ENCODE measurements at regions of chr7 and their contacts with region 1.

Region 1: GRCh38 chr7:37510043-37510634 is 61.5 kb upstream of the ELMO1 start:
- DNase-seq: peak; percentile 49
- H3K4me3 Mint-ChIP-seq: no peak overlapping the region
- H3K27ac Mint-ChIP-seq: no peak overlapping the region
- H3K4me1 Mint-ChIP-seq: no peaks in the 10 kb centered on the region
- H3K27me3 Mint-ChIP-seq: peaks cover 7% of the 10 kb centered on the region

Region 2: GRCh38 chr7:36986429-36987362 is 523.4 kb before region 1 on chr7:
- CTCF ChIA-PET with region 1: no interaction called
- intact Hi-C with region 1: loop called (anchors 2 kb)
- DNase-seq: peak; percentile 80
- H3K4me3 Mint-ChIP-seq: no peak overlapping the region
- H3K27ac Mint-ChIP-seq: no peak overlapping the region
- H3K4me1 Mint-ChIP-seq: peaks cover 27% of the 10 kb centered on the region
- H3K27me3 Mint-ChIP-seq: no peaks in the 10 kb centered on the region

Region 3: DNA sequence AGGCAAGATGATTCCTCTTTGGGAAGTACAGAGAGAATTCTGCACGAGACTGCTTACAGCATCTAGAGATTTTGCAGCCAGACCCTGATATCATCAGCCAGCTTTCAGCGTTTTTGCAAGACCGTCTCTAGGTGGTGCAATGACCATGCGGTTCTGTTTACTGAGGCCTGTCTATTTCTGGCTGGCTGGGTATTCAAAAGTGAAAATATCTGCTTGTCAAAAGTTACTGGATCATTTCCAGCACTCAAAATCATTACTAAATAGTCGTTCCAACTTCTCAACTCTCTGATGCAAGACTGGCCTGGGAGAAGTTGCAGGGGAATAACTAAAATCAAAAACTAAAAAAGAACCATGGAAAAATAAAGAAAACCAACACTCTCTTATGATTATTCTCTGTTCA is 301.6 kb before region 1 on chr7:
- CTCF ChIA-PET with region 1: interaction called, 4 read pairs
- intact Hi-C with region 1: loop called (anchors 5 kb)
- DNase-seq: peak; percentile 52
- H3K4me3 Mint-ChIP-seq: no peak overlapping the region
- H3K27ac Mint-ChIP-seq: peak overlapping the region; percentile 56
- H3K4me1 Mint-ChIP-seq: peaks cover 23% of the 10 kb centered on the region
- H3K27me3 Mint-ChIP-seq: no peaks in the 10 kb centered on the region

Region 4: DNA sequence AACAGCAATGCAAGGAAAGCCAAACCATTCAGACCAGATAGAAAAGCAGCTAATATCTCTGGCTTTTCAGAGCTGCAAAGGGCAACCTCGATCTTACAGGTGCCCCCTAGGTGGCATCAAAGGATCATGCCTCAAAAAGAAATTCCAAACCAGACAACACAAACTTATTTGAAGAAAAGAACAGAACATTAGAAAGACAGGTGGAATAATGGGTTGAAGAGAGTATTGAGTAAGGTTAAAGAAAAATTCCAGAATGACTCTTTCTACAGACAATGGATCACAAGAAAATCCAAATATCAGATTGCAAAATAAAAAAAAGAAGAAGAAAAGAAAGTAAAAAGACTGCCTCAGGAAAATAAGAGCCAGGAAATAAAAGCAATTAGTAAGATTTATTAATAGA is 275.2 kb before region 1 on chr7:
- CTCF ChIA-PET with region 1: interaction called, 19 read pairs
- intact Hi-C with region 1: no loop called
- DNase-seq: no peak
- H3K4me3 Mint-ChIP-seq: no peak overlapping the region
- H3K27ac Mint-ChIP-seq: no peak overlapping the region
- H3K4me1 Mint-ChIP-seq: peaks cover 16% of the 10 kb centered on the region
- H3K27me3 Mint-ChIP-seq: no peaks in the 10 kb centered on the region

Region 5: DNA sequence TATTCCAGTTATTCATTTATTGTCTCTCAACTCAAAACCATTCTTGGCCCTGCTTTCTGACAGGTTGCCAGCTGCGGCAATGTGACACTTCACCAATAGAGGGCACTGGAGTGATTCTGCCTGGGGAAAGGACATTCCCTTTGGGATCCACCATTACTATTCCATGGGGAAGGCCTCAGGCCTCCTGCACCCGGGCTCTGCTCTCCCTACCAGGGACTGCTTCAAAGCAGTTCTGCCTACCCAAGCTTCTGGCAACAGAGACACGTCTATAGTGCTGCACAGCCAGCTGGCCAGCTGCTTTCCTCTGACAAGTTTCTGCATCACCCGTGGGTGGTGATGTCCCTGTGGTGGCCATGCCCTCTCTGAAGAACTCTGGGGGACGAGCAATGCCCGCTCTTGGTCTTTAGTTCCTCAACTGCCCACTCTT is 225.3 kb before region 1 on chr7:
- CTCF ChIA-PET with region 1: interaction called, 6 read pairs
- intact Hi-C with region 1: loop called (anchors 1 kb)
- DNase-seq: peak; percentile 53
- H3K4me3 Mint-ChIP-seq: no peak overlapping the region
- H3K27ac Mint-ChIP-seq: no peak overlapping the region
- H3K4me1 Mint-ChIP-seq: peaks cover 72% of the 10 kb centered on the region
- H3K27me3 Mint-ChIP-seq: no peaks in the 10 kb centered on the region

Region 6: DNA sequence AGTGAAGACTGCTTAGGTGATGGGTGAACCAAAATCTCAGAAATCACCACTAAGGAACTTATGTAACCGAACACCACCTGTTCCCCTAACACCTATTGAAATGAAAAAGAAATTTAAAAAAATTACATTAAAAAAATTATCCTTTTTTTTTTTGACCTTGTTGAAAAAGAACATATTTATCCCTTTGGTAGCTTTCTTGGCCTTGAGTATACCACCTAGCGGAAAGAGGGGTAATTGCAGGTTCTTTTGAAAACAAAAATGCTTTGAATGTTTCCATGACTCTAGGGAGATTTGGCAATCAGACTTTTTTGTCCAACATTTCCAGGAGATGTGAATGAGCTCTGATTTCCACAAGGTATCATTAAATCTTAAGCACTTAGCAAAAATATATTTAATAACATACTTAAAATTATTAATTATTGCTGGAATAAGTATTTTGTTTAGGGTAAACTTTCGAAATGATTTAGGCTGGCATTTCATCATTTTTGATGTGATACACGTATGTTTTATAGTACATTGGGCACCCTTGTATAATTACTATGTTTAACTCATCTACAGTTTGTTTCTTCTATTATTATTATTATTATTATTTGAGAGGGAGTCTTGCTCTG is 14.5 kb before region 1 on chr7:
- CTCF ChIA-PET with region 1: interaction called, 48 read pairs
- intact Hi-C with region 1: no loop called
- DNase-seq: no peak
- H3K4me3 Mint-ChIP-seq: no peak overlapping the region
- H3K27ac Mint-ChIP-seq: no peak overlapping the region
- H3K4me1 Mint-ChIP-seq: peaks cover 8% of the 10 kb centered on the region
- H3K27me3 Mint-ChIP-seq: no peaks in the 10 kb centered on the region

Region 7: GRCh38 chr7:37540917-37541316 is 30.8 kb after region 1 on chr7:
- CTCF ChIA-PET with region 1: no interaction called
- intact Hi-C with region 1: no loop called
- DNase-seq: no peak
- H3K4me3 Mint-ChIP-seq: no peak overlapping the region
- H3K27ac Mint-ChIP-seq: no peak overlapping the region
- H3K4me1 Mint-ChIP-seq: no peaks in the 10 kb centered on the region
- H3K27me3 Mint-ChIP-seq: no peaks in the 10 kb centered on the region

Measured in activated naive CD4-positive, alpha-beta T cell treated with anti-CD3 and anti-CD28 coated beads for 36 hours (primary cell).